Heart left ventricle (tissue), 16 donors: ENCODE measurements at regions of chr17 and their contacts with region 1.

Region 1: DNA sequence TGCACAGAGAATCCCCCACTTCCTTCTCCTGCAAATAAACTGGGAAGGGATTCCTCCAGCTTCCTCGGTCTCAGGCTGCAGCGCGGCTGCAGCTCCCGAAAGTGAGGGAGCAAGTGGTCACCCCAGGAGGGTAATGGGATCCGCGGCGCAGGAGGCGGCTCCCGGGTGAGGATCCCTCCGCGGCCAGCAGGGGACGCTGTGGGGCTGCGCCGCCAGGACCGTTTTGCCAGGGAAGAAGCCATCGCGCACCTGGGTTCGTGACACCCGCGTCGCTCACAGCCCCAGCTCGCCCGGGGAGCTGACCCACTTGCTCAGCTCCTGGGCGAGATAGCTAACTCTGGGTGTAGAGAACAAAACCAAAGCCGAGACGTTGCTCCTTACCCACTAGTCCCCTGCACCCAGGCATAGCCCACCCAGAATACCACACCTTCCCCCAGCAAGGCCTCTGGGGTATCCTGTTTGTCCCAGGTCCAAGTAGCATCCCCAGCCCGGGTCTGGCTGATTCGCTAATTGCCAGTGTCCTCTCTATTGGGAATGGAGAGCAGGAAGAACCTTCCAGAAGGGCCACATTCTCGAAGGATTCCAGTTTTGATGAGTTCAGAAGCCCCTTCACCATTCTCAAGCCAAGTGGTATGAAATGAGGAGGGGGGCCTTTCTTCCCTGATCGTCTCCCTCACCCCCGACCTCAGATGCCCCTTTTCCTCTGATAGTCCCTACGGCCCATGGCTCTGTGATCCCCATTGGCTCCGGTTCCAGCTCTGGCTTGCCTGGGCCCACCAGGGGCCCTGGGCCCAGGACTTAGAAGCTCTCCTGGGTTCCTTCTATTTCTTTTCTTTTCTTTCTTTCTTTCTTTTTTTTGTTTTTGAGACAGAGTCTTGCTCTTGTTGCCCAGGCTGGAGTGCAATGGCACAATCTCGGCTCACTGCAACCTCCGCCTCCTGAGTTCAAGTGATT is 14.1 kb downstream of the CYGB start:
- DNase-seq: peak; percentile 66 to 91 (median 75)
- ATAC-seq: peak; percentile 6 to 60 (median 47)
- H3K4me3 ChIP-seq: no peak overlapping the region
- H3K27ac ChIP-seq: no peak overlapping the region
- H3K4me1 ChIP-seq: peaks cover 2 to 40% (median 28%) of the 10 kb centered on the region in 12 donors
- H3K27me3 ChIP-seq: no peaks in the 10 kb centered on the region
- CTCF ChIP-seq: peak; percentile 97 to 100 (median 100)
- POLR2A ChIP-seq: no peak

Region 2: DNA sequence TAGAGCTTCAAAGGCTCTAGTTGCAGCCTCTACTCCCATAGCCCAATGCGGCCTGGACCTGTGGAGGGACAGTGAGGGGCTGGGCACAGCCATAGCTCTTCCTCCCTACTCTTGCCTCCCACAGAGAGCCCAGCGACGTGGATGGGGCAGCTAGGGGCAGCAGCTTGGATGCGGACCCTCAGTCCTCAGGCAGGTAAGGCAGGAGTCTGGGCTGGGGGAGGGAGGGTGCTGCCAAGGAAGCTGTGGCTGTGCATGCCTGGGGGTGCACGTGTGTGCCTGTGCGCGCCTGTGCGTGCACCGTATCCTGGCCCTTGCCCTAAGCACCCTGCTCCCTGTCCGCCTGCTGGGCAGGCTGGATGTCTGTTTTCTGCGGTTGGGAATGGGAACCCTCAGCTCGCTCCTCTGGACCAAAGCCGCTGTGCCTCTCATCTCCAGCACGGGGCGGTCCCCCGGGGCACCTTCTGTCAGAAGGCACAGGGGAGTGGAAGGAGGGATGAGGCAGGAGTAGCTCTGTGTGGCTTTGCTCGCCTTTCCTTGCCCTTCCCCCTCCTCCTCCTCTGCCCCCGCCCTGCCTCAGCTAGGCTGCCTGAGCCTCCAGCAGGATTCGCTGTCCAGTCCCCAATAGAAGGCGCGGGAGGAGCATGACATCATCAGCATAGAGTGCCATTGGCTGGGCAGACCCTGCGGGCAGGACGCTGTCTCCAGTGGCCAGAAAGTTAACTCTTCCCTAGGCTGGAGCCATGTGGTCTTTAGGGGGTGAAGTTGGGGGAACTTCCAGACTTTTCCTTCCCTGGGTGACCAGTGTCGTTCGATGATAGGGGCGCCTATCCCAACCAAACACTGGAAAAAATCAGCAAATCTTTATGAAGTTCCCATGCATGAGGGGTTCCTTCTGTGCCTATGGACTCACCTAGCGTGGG is 17.3 kb after region 1 on chr17:
- intact Hi-C with region 1: loop called in 1 of 10 experiments (anchors 2 kb)
- DNase-seq: peak; percentile 93 to 97 (median 96)
- ATAC-seq: peak; percentile 91 to 97 (median 93)
- H3K4me3 ChIP-seq: peak overlapping the region in 11 of 12 donors; percentile 12 to 53 (median 44)
- H3K27ac ChIP-seq: peak overlapping the region in 11 of 12 donors; percentile 58 to 81 (median 76)
- H3K4me1 ChIP-seq: peaks cover 13 to 82% (median 55%) of the 10 kb centered on the region in 12 donors
- H3K27me3 ChIP-seq: peaks cover 0 to 38% (median 0%) of the 10 kb centered on the region in 9 donors
- CTCF ChIP-seq: peak in 5 of 12 donors; percentile 9 to 55 (median 39)
- POLR2A ChIP-seq: peak in 1 of 2 donors; percentile 48

Region 3: DNA sequence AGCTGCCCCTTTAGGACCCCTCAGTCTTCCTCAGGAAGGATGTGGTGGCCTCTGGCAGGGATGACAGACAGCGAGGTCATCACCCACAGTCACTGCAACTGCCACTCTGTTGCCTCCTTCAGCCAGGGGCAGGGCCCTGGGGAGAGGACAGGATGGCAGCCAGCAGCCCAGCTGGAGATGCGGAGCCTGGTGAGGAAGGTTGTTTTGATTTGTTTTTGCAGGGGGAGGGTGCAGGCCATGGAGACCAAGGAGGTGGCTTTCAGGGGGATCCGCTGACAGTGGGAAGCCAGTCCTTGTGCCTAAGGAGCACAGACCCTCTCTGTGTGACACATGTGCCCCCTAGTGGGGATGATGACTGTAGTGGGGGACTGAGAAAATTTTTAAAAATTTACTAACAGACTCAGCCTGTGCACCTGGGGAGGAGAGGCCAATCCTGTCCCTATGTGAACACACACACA is 23.9 kb after region 1 on chr17:
- intact Hi-C with region 1: loop called in 9 of 10 experiments (anchors 1 to 2 kb)
- DNase-seq: peak in 4 of 5 donors; percentile 74 to 77 (median 75)
- ATAC-seq: peak; percentile 19 to 67 (median 50)
- H3K4me3 ChIP-seq: no peak overlapping the region
- H3K27ac ChIP-seq: peak overlapping the region in 11 of 12 donors; percentile 0 to 84 (median 24)
- H3K4me1 ChIP-seq: peaks cover 10 to 61% (median 46%) of the 10 kb centered on the region in 12 donors
- H3K27me3 ChIP-seq: no peaks in the 10 kb centered on the region
- CTCF ChIP-seq: peak; percentile 58 to 81 (median 75)
- POLR2A ChIP-seq: no peak

Region 4: GRCh38 chr17:76585818-76586593 is 62.6 kb after region 1 on chr17 and contains the start of gene ST6GALNAC2:
- intact Hi-C with region 1: loop called in 4 of 10 experiments (anchors 1 to 5 kb)
- DNase-seq: peak; percentile 55 to 82 (median 78)
- ATAC-seq: peak; percentile 84 to 94 (median 94)
- H3K4me3 ChIP-seq: peak within 1 kb of the TSS; percentile 57 to 81 (median 64)
- H3K27ac ChIP-seq: peak within 1 kb of the TSS in 9 of 12 donors; percentile 5 to 68 (median 46)
- H3K4me1 ChIP-seq: peaks cover 0 to 25% (median 17%) of the 10 kb centered on the region in 12 donors
- H3K27me3 ChIP-seq: peaks cover 0 to 43% (median 3%) of the 10 kb centered on the region in 9 donors
- CTCF ChIP-seq: peak in 11 of 12 donors; percentile 15 to 65 (median 42)
- POLR2A ChIP-seq: no peak
- total RNA-seq, gene ST6GALNAC2: 3.3 to 7.8 (median 5.6) TPM

Region 5: GRCh38 chr17:76623271-76624146 is 100.1 kb after region 1 on chr17:
- intact Hi-C with region 1: loop called (anchors 1 to 10 kb)
- DNase-seq: peak; percentile 61 to 90 (median 72)
- ATAC-seq: peak; percentile 47 to 95 (median 90)
- H3K4me3 ChIP-seq: no peak overlapping the region
- H3K27ac ChIP-seq: no peak overlapping the region
- H3K4me1 ChIP-seq: peaks cover 0 to 7% (median 0%) of the 10 kb centered on the region in 12 donors
- H3K27me3 ChIP-seq: no peaks in the 10 kb centered on the region
- CTCF ChIP-seq: peak; percentile 93 to 98 (median 96)
- POLR2A ChIP-seq: no peak

Region 6: GRCh38 chr17:76681222-76682137 is 158.1 kb after region 1 on chr17:
- intact Hi-C with region 1: loop called in 1 of 10 experiments (anchors 5 kb)
- DNase-seq: peak; percentile 69 to 82 (median 73)
- ATAC-seq: peak; percentile 52 to 71 (median 60)
- H3K4me3 ChIP-seq: peak overlapping the region in 2 of 12 donors; percentile 1 to 3
- H3K27ac ChIP-seq: peak overlapping the region; percentile 36 to 99 (median 89)
- H3K4me1 ChIP-seq: peaks cover 14 to 61% (median 51%) of the 10 kb centered on the region in 12 donors
- H3K27me3 ChIP-seq: no peaks in the 10 kb centered on the region
- CTCF ChIP-seq: peak; percentile 53 to 84 (median 74)
- POLR2A ChIP-seq: no peak

Region 7: GRCh38 chr17:76826330-76827068 is 303.1 kb after region 1 on chr17:
- intact Hi-C with region 1: no loop called
- DNase-seq: no peak
- ATAC-seq: no peak
- H3K4me3 ChIP-seq: no peak overlapping the region
- H3K27ac ChIP-seq: no peak overlapping the region
- H3K4me1 ChIP-seq: no peaks in the 10 kb centered on the region
- H3K27me3 ChIP-seq: peaks cover 0 to under 1% (median 0%) of the 10 kb centered on the region in 9 donors
- CTCF ChIP-seq: no peak
- POLR2A ChIP-seq: no peak